ENCODE measurements at regions of chr9 and their contacts with region 1.

Region 1: GRCh38 chr9:112074250-112075008 is 100.7 kb downstream of the SUSD1 start:
- DNase-seq: peak; percentile 78
- H3K4me3 ChIP-seq: no peak overlapping the region
- H3K27ac ChIP-seq: peak overlapping the region; percentile 54
- H3K4me1 ChIP-seq: peaks cover 6% of the 10 kb centered on the region
- H3K27me3 ChIP-seq: no peaks in the 10 kb centered on the region
- CTCF ChIP-seq: peak; percentile 81

Region 2: DNA sequence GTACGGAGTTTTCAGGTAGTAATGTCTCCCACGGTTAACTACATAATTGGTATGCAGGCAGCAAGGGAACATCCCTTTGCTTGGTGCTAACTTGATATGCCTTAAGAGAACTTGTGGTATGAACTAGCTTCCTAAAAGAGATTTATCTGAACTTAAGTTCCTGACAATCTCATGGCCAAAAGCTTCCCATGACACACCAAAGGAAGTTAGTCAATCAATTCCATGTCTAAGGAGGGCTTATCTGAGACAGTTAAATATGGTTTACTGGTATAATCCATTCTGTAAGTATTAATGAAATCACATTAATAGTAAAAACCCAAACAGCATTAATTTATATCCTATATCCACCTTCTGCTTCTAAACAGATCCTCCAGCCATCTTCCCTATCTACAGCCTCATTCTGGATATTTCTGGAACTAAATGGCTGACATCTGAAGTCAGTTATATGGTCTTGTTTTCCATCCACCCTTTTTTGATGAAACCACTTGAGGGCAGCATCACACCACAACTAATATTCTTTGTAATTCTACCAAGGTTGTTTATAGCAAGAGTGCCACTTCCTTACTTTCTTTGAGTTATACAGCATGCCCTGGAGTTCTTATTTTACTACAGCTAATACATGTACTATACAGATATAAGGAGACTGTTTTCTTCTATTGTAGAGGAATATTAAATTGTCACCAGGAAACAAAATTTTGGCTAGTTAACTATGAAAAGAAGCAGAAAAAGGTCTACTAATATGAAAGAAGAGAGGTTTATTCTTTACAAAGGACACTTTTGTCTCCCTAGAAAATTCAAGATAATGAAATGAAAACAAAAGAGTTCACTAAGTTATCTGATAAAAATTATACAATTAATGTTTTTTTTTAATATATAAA is 314.4 kb before region 1 on chr9:
- intact Hi-C with region 1: loop called (anchors 2 kb)
- DNase-seq: peak; percentile 71
- H3K4me3 ChIP-seq: no peak overlapping the region
- H3K27ac ChIP-seq: no peak overlapping the region
- H3K4me1 ChIP-seq: no peaks in the 10 kb centered on the region
- H3K27me3 ChIP-seq: no peaks in the 10 kb centered on the region
- CTCF ChIP-seq: peak; percentile 48

Region 3: GRCh38 chr9:111896353-111896958 is 178.0 kb before region 1 on chr9 and contains the start of gene UGCG:
- intact Hi-C with region 1: loop called (anchors 10 kb)
- DNase-seq: peak; percentile 90
- H3K4me3 ChIP-seq: peak within 1 kb of the TSS; percentile 84
- H3K27ac ChIP-seq: peak within 1 kb of the TSS; percentile 95
- H3K4me1 ChIP-seq: peaks cover 4% of the 10 kb centered on the region
- H3K27me3 ChIP-seq: no peaks in the 10 kb centered on the region
- CTCF ChIP-seq: no peak
- total RNA-seq, gene UGCG: 17.6 to 56.1 TPM

Region 4: DNA sequence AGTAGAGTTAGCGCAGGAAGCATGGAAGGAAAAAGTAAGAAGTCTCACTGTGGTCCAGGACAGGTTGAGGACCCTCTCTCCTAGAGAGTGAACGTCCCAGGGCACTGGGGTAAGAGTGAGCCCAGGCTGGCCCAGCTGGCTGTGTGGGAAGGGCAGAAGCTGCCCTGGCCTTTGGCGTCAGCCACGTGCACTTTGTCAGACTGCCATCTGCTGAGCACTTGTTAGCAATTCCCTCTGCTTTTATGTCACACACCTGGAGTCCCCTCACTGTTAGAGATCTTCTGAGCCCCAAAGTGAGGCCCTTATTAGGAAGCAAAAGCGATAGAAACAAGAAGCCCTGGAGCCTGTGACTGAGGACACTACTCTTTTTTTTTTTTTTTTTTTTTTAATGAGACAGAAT is 98.7 kb before region 1 on chr9:
- intact Hi-C with region 1: loop called (anchors 10 kb)
- DNase-seq: peak; percentile 63
- H3K4me3 ChIP-seq: no peak overlapping the region
- H3K27ac ChIP-seq: no peak overlapping the region
- H3K4me1 ChIP-seq: no peaks in the 10 kb centered on the region
- H3K27me3 ChIP-seq: no peaks in the 10 kb centered on the region
- CTCF ChIP-seq: no peak

Measured in colonic mucosa (tissue), 4 donors.